ENCODE measurements at regions of chr7 and their contacts with region 1.

Region 1: DNA sequence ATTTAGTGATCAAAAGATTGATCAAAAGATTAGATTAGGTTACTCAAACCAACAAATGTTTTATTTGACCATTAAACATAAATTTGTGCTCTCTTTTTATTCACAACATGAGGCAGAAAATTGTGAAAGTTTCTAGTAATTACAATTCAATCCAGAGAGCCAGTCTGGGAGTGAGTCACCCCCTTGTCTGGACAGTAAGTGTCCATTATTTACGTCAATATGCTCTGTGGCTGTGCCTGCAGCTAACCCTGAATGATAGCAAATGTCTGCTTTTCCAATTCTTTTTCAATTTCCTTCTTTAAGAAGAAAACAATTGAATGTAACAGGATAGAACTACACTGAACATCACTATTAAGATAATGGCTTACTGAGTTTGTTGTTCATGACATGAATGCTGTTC is 27.9 kb downstream of the GNG11 start:
- DNase-seq: no peak
- ATAC-seq: peak in 2 of 8 donors; percentile 49 to 71
- H3K4me3 ChIP-seq: no peak overlapping the region
- H3K27ac ChIP-seq: peak overlapping the region in 4 of 10 donors; percentile 19 to 60 (median 32)
- H3K4me1 ChIP-seq: peaks cover 0 to 30% (median 19%) of the 10 kb centered on the region in 9 donors
- H3K27me3 ChIP-seq: no peaks in the 10 kb centered on the region
- CTCF ChIP-seq: no peak

Region 2: DNA sequence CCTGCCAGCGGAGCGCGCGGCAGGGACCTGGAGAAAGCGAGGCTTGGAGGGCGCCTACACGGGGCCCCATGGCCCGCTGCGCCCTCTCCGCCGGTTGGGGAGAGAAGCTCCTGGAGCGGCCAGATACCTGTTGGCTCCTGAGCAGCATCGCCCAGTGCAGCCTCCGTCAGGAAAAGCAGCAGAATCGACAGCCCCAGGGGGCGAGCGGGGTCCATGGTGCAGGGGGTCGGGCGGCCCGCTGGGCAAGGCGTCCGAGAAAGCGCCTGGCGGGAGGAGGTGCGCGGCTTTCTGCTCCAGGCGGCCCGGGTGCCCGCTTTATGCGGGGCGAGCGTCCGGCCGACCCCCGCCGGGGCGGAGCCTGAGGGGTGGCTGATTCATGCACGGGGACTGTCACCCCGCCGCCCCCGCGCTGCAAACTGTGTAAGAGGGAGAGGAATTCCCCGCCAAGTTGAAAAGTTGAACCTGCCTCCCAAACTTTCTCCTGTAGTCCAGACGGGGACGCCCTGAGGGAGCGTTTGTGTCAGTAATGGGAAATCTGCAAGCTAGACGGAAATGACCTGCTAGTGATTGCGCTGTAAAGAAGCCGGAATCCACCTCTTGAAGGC is 58.9 kb before region 1 on chr7 and contains the start of gene TFPI2:
- intact Hi-C with region 1: no loop called
- DNase-seq: peak; percentile 15 to 47
- ATAC-seq: peak; percentile 62 to 85 (median 79)
- H3K4me3 ChIP-seq: peak within 1 kb of the TSS; percentile 41 to 68 (median 62)
- H3K27ac ChIP-seq: peak within 1 kb of the TSS in 9 of 10 donors; percentile 13 to 66 (median 46)
- H3K4me1 ChIP-seq: peaks cover 0 to 26% (median 11%) of the 10 kb centered on the region in 9 donors
- H3K27me3 ChIP-seq: peaks cover 0 to 33% (median 9%) of the 10 kb centered on the region in 7 donors
- CTCF ChIP-seq: peak in 3 of 9 donors; percentile 18 to 41 (median 24)
- total RNA-seq, gene TFPI2: 1.1 to 13.4 (median 2.2) TPM

Region 3: GRCh38 chr7:93997868-93998267 is 48.4 kb after region 1 on chr7:
- intact Hi-C with region 1: loop called in 1 of 10 experiments (anchors 1 kb)
- DNase-seq: no peak
- ATAC-seq: no peak
- H3K4me3 ChIP-seq: no peak overlapping the region
- H3K27ac ChIP-seq: no peak overlapping the region
- H3K4me1 ChIP-seq: peaks cover 0 to 31% (median 9%) of the 10 kb centered on the region in 9 donors
- H3K27me3 ChIP-seq: no peaks in the 10 kb centered on the region
- CTCF ChIP-seq: no peak

Measured in heart right ventricle (tissue), 16 donors.